Psoas muscle (tissue), 8 donors: ENCODE measurements at regions of chr19 and their contacts with region 1.

Region 1: DNA sequence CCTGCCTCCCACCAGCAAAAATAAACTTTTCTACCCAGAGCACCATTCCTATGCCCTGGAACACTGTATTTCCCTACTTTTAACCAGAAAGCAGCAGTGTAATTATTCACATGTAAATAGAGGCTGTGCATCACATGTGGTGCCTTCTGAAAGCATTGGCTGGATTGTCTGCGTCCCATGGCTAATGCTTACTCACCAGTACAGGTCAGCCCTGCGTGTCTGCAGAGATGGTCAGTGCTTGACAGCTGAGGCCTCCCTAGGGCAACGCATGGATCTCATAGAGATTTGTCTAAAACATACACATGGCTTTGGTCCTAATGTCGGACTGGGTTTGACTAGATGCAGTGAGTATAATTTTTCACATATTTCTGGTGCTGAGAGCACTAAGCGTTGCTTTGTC is 64.2 kb downstream of the DPY19L3 start:
- DNase-seq: no peak
- ATAC-seq: no peak
- H3K4me3 ChIP-seq: no peak overlapping the region
- H3K27ac ChIP-seq: no peak overlapping the region
- H3K4me1 ChIP-seq: no peaks in the 10 kb centered on the region
- H3K27me3 ChIP-seq: no peaks in the 10 kb centered on the region
- CTCF ChIP-seq: no peak

Region 2: GRCh38 chr19:32397526-32398135 is 72.2 kb before region 1 on chr19:
- intact Hi-C with region 1: no loop called
- DNase-seq: no peak
- ATAC-seq: no peak
- H3K4me3 ChIP-seq: no peak overlapping the region
- H3K27ac ChIP-seq: no peak overlapping the region
- H3K4me1 ChIP-seq: no peaks in the 10 kb centered on the region
- H3K27me3 ChIP-seq: no peaks in the 10 kb centered on the region
- CTCF ChIP-seq: no peak

Region 3: DNA sequence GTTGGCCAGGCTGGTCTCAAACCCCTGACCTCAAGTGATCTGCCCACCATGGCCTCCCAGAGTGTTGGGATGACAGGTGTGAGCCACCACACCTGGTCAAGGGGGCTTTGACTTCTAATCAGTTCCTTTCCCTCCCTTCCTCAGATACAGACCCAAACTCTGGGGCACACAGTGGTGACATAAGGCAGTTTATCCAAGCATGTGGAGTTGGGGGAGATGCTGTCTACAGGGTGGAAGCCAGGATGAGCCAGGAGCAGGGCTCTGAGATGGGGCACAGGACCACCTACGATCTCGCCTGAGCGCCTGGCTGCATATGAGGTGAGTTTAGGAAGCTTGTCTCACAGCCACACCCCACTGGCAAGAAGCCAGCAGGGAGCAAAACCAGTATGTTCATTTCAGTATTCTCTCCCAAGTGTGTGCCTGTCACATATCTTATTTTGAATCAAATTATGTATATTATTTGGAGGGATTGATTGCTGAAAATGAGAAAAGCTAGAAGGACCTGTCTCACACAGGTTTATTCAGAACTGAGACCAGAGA is 1394.6 kb after region 1 on chr19:
- intact Hi-C with region 1: loop called in 1 of 2 experiments (anchors 5 kb)
- DNase-seq: no peak
- ATAC-seq: no peak
- H3K4me3 ChIP-seq: no peak overlapping the region
- H3K27ac ChIP-seq: no peak overlapping the region
- H3K4me1 ChIP-seq: no peaks in the 10 kb centered on the region
- H3K27me3 ChIP-seq: peaks cover 0 to 18% (median 2%) of the 10 kb centered on the region in 3 donors
- CTCF ChIP-seq: no peak